ENCODE measurements at regions of chr16 and their contacts with region 1.

Region 1: DNA sequence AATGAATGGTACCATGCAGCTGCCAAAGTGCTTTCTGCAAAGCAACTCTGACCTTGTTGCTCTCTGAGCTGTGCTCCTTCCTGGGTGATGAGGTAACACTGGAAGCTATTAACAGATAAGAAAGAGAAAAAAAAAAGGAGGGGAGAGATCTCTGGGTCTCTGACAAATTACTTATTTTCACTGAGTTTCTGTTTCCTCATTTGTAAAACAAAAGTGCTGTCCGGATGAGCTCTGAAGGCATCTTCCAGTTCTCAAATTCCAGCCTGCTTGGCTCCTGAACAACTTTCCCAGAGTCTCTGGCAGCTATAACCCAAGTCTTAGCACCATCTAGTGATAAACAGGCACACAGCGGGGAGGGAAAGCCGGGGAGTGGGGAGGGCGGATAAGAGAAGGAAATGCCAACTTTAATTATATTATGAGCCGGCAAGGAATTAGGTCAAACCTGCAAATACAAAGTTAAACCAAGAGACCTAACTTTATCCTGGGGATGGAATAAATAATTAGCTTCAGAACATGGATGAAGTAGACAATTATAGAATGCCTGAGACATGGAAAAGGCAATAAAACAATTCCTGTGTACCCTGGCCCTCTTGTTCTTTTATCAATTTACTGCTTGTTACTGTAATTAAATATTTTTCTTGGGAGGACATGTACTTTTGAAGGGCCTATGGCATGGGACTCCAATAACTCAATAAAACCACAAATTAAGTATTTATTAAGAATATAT is 61.3 kb upstream of the KIFC3 start:
- DNase-seq: no peak
- ATAC-seq: peak; percentile 88

Region 2: DNA sequence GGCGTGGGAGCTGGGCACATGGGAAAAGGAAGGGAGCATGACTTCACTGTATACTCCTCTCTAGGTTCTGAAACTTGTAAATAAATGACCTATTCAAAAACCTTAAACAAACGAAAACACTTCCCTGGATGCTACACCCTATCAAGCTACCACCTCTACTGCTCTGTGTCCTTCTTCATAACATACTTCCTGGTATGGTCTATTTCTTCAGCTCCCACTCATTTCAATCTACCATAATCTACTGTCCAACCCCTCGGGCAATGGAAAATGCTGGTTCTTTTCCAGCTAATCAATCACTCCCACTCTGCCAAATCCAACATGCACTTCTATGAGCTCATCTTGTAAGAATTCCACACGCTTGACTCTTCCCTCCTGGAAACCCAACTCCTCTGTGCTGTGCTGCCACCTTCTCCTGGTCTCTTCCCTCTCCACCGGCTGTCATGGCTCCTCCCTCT is 1480.7 kb before region 1 on chr16:
- intact Hi-C with region 1: no loop called
- DNase-seq: no peak
- ATAC-seq: no peak

Region 3: DNA sequence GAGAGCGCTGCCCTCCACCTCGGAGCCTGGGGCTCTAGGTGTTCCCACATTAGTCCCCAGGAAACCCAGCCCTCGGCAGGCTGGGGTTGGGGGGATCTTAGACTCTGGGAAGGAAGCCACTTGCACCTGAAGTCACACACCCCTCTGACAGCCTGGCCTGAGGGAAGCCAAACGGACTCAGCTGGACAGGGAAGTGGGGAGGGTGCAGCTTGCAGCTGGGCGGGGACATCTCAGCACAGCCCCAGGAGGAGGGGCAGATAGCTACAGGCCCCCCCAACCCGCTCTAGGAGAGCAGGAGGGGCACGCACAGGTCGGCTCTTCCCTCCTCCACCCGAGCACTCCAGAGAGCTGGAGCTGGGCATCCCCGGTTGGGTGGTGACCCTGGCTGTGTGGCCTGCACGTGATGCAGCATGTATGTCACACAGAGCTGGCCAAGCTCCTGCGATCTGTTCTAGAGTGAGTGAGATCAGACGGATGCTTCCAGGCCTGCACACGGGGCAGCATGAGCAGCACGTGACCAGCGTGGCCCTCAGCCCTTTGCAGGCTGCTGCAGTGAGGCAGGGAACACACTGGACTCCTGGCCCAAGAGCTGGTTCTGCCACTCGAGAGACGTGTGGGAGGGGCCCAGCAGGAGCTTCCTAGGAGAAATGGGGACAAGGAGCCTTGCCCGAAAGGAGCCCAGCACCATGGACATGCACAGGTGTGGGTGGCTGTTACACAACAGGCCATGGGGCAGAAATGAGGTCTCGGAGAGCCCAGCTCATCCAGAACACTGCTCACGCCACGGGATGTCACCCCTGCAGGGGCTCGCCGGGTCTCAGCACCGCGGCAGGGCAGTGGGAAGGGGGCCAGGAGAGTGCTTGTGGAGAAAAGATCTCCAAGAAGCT is 76.7 kb before region 1 on chr16:
- intact Hi-C with region 1: no loop called
- DNase-seq: peak; percentile 82
- ATAC-seq: peak; percentile 90

Region 4: DNA sequence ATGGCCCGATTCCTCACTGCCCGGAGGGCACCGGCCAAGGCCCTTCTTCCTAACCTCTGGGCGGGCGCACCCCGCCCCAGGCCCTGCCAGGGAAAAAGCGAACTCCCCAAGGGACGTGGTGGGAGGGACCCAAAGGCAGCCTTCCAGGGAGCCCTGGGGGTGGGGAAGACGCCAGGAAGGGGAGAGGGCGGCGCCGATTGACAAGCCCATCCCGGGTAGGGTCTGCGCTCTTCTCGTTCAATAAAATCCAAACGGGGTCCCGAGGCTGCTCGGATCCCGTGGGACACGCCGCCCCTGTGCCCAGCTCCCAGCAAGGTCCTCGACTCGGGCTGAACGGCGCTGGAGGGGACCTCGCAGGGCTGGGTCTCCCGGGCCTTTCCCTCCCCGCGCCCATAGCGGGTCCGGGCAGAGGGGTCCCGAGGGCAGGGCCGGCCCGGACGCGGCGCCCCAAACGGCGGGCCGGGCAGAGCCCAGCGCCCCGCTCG is 61.7 kb before region 1 on chr16:
- intact Hi-C with region 1: loop called (anchors 2 kb)
- DNase-seq: no peak
- ATAC-seq: peak; percentile 22